ENCODE measurements at regions of chr10 and their contacts with region 1.

Region 1: GRCh38 chr10:88209837-88210561 is 346.6 kb downstream of the PTEN start:
- DNase-seq: no peak
- ATAC-seq: no peak
- H3K4me3 ChIP-seq: no peak overlapping the region
- H3K27ac ChIP-seq: no peak overlapping the region
- H3K4me1 ChIP-seq: peaks cover 0 to 7% (median 0%) of the 10 kb centered on the region in 9 donors
- H3K27me3 ChIP-seq: no peaks in the 10 kb centered on the region
- CTCF ChIP-seq: no peak

Region 2: DNA sequence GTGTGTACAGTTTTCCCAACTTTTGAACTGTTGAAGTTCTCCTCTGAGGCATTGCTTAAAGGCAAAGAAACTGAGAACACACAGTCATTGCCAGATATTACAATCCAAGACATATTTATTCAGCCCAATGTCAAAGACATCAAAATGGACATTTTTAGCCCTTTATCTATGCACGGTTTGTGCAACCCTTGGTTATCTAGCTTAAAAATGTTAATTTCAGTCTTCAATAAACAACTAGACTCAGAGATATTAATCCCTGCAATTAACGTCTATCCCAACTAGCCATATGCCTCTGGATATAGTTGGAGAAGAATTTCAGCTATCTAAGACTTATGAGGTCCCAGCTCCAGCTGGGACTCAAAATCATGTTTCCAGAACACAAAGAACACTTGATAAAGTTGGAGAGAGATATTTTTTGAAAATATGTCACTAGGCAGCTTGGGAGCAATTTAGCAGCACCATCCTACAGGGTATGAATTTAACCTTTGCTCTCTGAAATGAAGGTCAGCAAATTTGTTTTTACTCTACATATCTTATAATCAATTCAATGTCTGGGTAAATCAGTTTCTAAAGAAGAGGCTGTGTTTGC is 16.2 kb after region 1 on chr10:
- intact Hi-C with region 1: loop called in 1 of 10 experiments (anchors 1 kb)
- DNase-seq: no peak
- ATAC-seq: peak in 4 of 8 donors; percentile 41 to 73 (median 51)
- H3K4me3 ChIP-seq: no peak overlapping the region
- H3K27ac ChIP-seq: peak overlapping the region in 8 of 10 donors; percentile 4 to 75 (median 56)
- H3K4me1 ChIP-seq: peaks cover 6 to 39% (median 31%) of the 10 kb centered on the region in 9 donors
- H3K27me3 ChIP-seq: no peaks in the 10 kb centered on the region
- CTCF ChIP-seq: no peak

Region 3: DNA sequence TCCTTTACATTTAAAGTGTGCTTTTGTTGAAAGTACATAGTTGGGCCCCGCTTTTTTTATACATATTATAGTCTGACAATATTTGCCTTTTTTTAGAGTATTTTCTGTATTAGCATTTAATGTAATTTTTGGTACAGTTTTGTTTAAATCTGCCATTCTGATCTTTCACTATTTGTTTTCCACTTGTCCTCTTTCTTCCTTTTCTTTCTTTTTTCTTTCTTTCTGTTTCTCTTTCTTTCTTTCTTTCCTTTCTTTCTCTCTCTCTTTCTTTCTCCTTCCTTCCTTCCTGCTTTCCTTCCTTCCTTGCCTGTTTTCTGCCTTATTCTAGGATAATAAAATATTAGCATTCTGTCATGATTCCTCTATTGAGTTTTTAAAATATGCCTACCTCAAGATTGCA is 505.5 kb after region 1 on chr10:
- intact Hi-C with region 1: no loop called
- DNase-seq: no peak
- ATAC-seq: no peak
- H3K4me3 ChIP-seq: no peak overlapping the region
- H3K27ac ChIP-seq: no peak overlapping the region
- H3K4me1 ChIP-seq: no peaks in the 10 kb centered on the region
- H3K27me3 ChIP-seq: peaks cover 0 to 10% (median 4%) of the 10 kb centered on the region in 7 donors
- CTCF ChIP-seq: no peak